ENCODE measurements at regions of chr9 and their contacts with region 1.

Region 1: GRCh38 chr9:127943731-127944144 is 6.1 kb upstream of the DPM2 start:
- DNase-seq: peak; percentile 73 to 92 (median 80)
- ATAC-seq: peak; percentile 70 to 89 (median 86)
- H3K4me3 ChIP-seq: no peak overlapping the region
- H3K27ac ChIP-seq: no peak overlapping the region
- H3K4me1 ChIP-seq: no peaks in the 10 kb centered on the region
- H3K27me3 ChIP-seq: no peaks in the 10 kb centered on the region
- CTCF ChIP-seq: peak; percentile 45 to 77 (median 66)

Region 2: GRCh38 chr9:128034821-128035764 is 91.4 kb after region 1 on chr9:
- intact Hi-C with region 1: loop called in 2 of 3 experiments (anchors 5 kb)
- DNase-seq: peak; percentile 60 to 82 (median 70)
- ATAC-seq: peak; percentile 95 to 100 (median 98)
- H3K4me3 ChIP-seq: no peak overlapping the region
- H3K27ac ChIP-seq: no peak overlapping the region
- H3K4me1 ChIP-seq: no peaks in the 10 kb centered on the region
- H3K27me3 ChIP-seq: no peaks in the 10 kb centered on the region
- CTCF ChIP-seq: peak; percentile 71 to 86 (median 82)

Region 3: DNA sequence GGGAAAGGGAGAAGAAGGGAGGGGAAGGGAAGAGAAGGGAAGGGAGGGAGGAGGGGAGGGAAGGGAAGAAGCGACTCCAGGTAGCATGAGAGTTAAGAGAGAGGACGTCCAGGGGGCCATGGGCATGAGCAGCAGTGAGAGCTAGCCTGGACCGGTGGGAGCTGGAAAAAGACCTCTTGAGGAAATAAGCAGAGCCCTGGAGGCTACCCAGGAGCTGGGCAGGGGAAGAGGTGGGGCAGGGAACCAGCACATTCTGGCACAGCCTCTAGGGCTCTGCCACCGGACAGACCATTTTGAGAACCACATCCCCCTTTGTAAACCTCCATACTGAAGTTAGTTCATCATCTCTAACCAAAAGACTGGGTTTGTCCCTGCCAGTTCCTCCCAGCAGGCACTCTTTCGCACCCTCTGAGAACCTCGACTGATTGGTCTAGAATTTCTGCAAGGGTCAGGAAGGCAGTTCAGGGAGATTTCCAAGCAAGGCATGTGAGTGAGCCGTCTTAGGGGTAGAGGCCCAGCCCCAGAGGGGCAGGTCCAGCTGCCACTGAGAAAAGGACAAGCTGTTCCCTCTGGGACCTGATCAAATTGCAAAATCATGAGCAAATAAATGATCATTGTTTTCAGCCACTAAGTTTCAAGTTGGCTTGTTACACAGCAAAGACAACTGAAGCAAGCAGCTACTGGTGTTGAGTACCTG is 111.8 kb after region 1 on chr9:
- intact Hi-C with region 1: no loop called
- DNase-seq: peak in 5 of 6 donors; percentile 55 to 83 (median 78)
- ATAC-seq: peak; percentile 59 to 83 (median 70)
- H3K4me3 ChIP-seq: no peak overlapping the region
- H3K27ac ChIP-seq: peak overlapping the region; percentile 56 to 80 (median 64)
- H3K4me1 ChIP-seq: peaks cover 19 to 41% (median 31%) of the 10 kb centered on the region in 3 donors
- H3K27me3 ChIP-seq: no peaks in the 10 kb centered on the region
- CTCF ChIP-seq: no peak

Region 4: GRCh38 chr9:128117613-128118471 is 174.1 kb after region 1 on chr9:
- intact Hi-C with region 1: loop called in 2 of 3 experiments (anchors 5 kb)
- DNase-seq: peak; percentile 88 to 100 (median 96)
- ATAC-seq: peak; percentile 46 to 74 (median 68)
- H3K4me3 ChIP-seq: no peak overlapping the region
- H3K27ac ChIP-seq: no peak overlapping the region
- H3K4me1 ChIP-seq: peaks cover 3 to 24% (median 15%) of the 10 kb centered on the region in 3 donors
- H3K27me3 ChIP-seq: no peaks in the 10 kb centered on the region
- CTCF ChIP-seq: peak; percentile 100